ENCODE measurements at regions of chr22 and their contacts with region 1.

Region 1: DNA sequence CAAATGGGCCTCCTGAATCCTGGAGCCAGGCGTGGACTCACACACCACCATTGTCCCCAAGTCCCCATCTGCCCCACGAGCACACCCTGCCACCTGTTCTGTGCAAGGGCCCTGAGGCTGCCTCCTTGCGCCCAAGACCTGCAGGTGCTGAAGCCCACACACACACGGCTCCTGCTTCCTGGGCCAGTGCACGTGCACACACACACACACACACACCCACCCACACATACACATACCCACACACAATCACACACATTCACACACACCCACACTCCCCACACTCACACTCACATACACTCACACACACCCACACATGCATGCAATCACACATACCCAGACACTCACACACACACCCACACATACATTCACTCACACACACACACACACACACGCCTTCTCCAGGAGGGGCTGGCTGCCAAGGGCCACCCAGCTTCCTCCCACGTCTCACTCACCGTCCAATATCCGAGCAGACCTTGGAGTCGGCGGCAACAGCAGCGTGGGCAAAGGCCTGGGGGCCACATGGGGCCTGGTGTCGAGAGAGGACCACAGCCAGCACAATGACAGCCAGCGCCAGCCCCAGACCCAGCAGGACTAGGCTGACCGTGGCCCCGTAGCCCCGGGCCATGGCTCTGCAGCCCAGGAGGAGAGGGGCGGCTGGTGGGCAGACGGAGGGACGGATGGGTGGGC is 638 bp downstream of the GGT5 start:
- DNase-seq: peak; percentile 84
- H3K4me3 ChIP-seq: no peak overlapping the region; a peak in 1 of 4 replicates
- H3K27ac ChIP-seq: peak overlapping the region in 1 of 2 experiments; percentile 89; a peak in 2 of 4 replicates
- H3K4me1 ChIP-seq: peaks cover 26 to 52% of the 10 kb centered on the region in 2 experiments; a peak in 3 of 4 replicates
- H3K27me3 ChIP-seq: no peaks in the 10 kb centered on the region
- CTCF ChIP-seq: no peak
- EP300 ChIP-seq: peak in 1 of 2 experiments; percentile 14; a peak in 1 of 4 replicates
- RAD21 ChIP-seq: no peak

Region 2: DNA sequence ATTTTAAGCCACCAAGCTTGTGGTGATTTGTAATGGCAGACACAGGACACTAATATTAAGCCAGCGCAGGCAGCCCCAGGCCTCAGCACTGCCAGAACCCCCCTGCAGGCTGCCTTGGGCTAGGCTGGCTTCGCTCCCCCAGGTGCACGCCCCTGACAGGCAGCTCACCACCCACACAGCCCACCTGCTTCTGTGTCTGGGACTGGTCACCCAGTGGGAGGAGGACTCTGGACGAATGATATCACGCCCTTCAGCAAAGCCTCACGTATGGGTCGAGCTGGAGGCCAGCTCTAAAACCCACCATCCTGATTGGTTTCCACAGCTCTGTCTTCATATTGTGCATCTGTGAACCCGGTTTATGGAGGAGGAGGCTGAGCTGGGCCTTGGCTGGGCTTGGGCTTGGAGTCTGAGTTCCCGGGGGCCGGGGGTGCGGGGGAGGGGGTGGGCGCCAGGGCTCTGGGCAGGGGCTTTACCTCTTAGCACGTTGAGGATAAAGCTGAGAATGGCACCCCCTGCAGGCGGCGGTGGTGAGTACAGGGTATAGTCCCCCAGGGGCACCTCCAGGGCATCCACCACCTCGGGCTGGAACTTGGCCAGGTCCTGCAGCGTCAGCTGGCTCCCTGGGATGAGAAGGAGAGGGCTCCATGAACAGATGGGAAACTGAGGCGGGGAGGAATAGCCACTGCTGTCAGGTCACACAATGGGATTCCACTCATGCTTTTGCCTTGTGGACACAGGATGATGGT is 13.2 kb before region 1 on chr22:
- CTCF ChIA-PET with region 1: interaction called, 11 read pairs
- POLR2A ChIA-PET with region 1: no interaction called
- DNase-seq: peak; percentile 53
- H3K4me3 ChIP-seq: no peak overlapping the region
- H3K27ac ChIP-seq: no peak overlapping the region
- H3K4me1 ChIP-seq: peaks cover 0 to 5% of the 10 kb centered on the region in 2 experiments; a peak in 1 of 4 replicates
- H3K27me3 ChIP-seq: no peaks in the 10 kb centered on the region
- CTCF ChIP-seq: peak; percentile 37; the same call in 1 of the 2 replicates
- EP300 ChIP-seq: no peak
- RAD21 ChIP-seq: no peak

Region 3: DNA sequence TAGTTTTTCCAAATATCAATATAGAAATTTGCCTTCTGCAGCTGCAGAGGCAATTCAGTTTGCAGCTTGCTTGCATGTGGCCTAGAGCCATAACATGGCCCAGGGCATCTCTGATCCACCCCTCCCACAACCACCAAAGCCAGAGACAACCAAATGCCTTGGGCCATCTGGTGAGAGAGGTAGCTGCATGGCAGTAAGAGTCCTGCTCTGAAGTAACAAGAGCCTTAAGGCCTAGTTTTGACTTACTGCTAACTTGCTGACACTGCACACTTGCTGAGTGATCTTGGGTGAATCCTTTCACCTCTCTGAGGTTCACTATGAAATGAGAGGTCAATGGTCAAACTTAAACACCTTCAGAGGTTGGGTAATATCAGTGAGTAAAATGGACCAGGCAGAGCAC is 21.5 kb after region 1 on chr22:
- CTCF ChIA-PET with region 1: no interaction called
- POLR2A ChIA-PET with region 1: no interaction called
- DNase-seq: no peak
- H3K4me3 ChIP-seq: no peak overlapping the region
- H3K27ac ChIP-seq: peak overlapping the region in 1 of 2 experiments; percentile 67; a peak in 2 of 4 replicates
- H3K4me1 ChIP-seq: peaks cover 0 to 9% of the 10 kb centered on the region in 2 experiments; a peak in 1 of 4 replicates
- H3K27me3 ChIP-seq: no peaks in the 10 kb centered on the region
- CTCF ChIP-seq: no peak
- EP300 ChIP-seq: no peak
- RAD21 ChIP-seq: no peak

Measured in SK-N-SH (cell line).